Activated naive CD4-positive, alpha-beta T cell treated with anti-CD3 and anti-CD28 coated beads for 36 hours (primary cell): ENCODE measurements at regions of chr1 and their contacts with region 1.

Region 1: GRCh38 chr1:225777583-225778336 is at the start of gene SRP9:
- DNase-seq: peak; percentile 99
- H3K4me3 Mint-ChIP-seq: no peak within 1 kb of the TSS
- H3K27ac Mint-ChIP-seq: no peak within 1 kb of the TSS
- H3K4me1 Mint-ChIP-seq: peaks cover 32% of the 10 kb centered on the region
- H3K27me3 Mint-ChIP-seq: no peaks in the 10 kb centered on the region
- total RNA-seq, gene SRP9: 356 to 363 TPM

Region 2: DNA sequence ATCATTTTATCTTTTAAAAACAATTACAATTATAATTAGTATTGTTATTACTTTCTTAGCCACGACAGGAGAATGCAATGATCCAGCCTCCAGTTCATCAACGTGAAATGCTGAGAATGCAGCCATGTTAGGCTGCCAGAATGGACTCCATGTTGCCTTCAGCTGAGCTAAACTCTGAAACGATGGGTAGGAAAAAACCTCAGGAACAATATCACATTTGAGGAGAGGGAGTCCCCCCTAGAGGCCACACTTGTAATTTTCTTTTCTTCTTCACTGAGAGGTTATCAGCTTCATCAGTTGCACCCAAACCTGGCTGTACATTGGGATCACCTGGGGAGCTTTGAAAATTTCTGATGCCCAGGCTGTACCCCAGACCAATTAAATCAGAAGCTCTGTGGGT is 882.8 kb before region 1 on chr1:
- CTCF ChIA-PET with region 1: no interaction called
- intact Hi-C with region 1: no loop called
- DNase-seq: no peak
- H3K4me3 Mint-ChIP-seq: no peak overlapping the region
- H3K27ac Mint-ChIP-seq: no peak overlapping the region
- H3K4me1 Mint-ChIP-seq: no peaks in the 10 kb centered on the region
- H3K27me3 Mint-ChIP-seq: peaks cover 2% of the 10 kb centered on the region

Region 3: GRCh38 chr1:225044258-225044657 is 733.5 kb before region 1 on chr1:
- CTCF ChIA-PET with region 1: no interaction called
- intact Hi-C with region 1: no loop called
- DNase-seq: no peak
- H3K4me3 Mint-ChIP-seq: no peak overlapping the region
- H3K27ac Mint-ChIP-seq: no peak overlapping the region
- H3K4me1 Mint-ChIP-seq: no peaks in the 10 kb centered on the region
- H3K27me3 Mint-ChIP-seq: peaks cover 4% of the 10 kb centered on the region

Region 4: DNA sequence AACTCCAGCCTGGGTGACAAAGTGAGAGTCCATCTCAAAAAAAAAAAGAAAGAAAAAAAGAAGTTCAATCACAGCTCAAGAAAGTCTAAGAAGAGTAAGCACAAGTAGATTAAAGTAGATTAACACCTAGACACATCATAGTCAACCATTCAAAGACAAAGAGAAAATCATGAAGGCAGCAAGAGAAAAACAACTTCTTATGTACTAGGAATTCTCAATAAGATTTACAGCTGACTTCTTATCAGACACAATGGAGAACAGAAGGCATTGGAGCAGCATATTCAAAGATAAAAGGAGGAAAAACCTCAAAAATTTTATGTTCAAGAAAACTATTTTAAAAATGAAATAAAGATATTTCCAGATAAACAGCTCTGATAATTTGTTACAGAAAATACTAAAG is 497.2 kb before region 1 on chr1:
- CTCF ChIA-PET with region 1: no interaction called
- intact Hi-C with region 1: no loop called
- DNase-seq: no peak
- H3K4me3 Mint-ChIP-seq: no peak overlapping the region
- H3K27ac Mint-ChIP-seq: no peak overlapping the region
- H3K4me1 Mint-ChIP-seq: no peaks in the 10 kb centered on the region
- H3K27me3 Mint-ChIP-seq: peaks cover 4% of the 10 kb centered on the region

Region 5: GRCh38 chr1:225441314-225442122 is 336.2 kb before region 1 on chr1:
- CTCF ChIA-PET with region 1: no interaction called
- intact Hi-C with region 1: loop called (anchors 1 kb)
- DNase-seq: no peak
- H3K4me3 Mint-ChIP-seq: peak overlapping the region; percentile 12
- H3K27ac Mint-ChIP-seq: peak overlapping the region; percentile 36
- H3K4me1 Mint-ChIP-seq: peaks cover 51% of the 10 kb centered on the region
- H3K27me3 Mint-ChIP-seq: no peaks in the 10 kb centered on the region

Region 6: DNA sequence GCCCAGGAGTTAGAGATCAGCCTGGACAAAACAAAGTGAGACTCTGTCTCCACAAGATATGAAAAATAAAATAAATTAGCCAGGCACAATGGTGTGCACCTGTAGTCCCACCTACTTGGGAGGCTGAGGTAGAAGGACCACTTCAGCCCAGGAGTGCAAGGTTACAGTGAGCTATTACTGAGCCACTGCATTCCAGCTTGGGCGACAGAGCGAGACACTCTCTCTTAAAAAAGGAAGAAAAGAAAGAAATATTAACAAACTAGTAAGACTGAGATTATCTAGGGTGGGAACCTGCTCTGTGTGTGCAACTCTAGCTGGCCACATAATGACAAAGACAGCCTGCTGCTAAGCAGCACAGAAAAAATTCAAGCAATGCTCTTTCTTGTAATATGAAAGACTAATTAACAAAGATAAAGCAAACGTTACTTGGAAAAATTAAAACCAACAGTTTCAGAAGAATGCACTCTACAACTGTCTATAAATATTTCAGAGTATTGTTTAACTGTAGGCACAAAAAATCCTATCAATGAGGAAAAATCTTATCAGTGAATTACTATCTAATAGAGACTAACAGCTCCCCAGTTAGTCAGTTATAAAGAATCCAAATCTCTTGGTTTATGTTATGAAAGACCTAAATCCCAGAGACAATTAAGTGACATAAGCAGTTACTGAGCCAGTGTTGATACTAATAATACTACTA is 199.4 kb before region 1 on chr1:
- CTCF ChIA-PET with region 1: no interaction called
- intact Hi-C with region 1: no loop called
- DNase-seq: no peak
- H3K4me3 Mint-ChIP-seq: no peak overlapping the region
- H3K27ac Mint-ChIP-seq: no peak overlapping the region
- H3K4me1 Mint-ChIP-seq: peaks cover 2% of the 10 kb centered on the region
- H3K27me3 Mint-ChIP-seq: no peaks in the 10 kb centered on the region

Region 7: GRCh38 chr1:225652729-225653462 is 124.9 kb before region 1 on chr1 and contains the start of gene ENAH:
- CTCF ChIA-PET with region 1: interaction called, 5 read pairs
- intact Hi-C with region 1: loop called (anchors 5 kb)
- DNase-seq: peak; percentile 52
- H3K4me3 Mint-ChIP-seq: peak within 1 kb of the TSS; percentile 85
- H3K27ac Mint-ChIP-seq: peak within 1 kb of the TSS; percentile 50
- H3K4me1 Mint-ChIP-seq: peaks cover 10% of the 10 kb centered on the region
- H3K27me3 Mint-ChIP-seq: peaks cover 24% of the 10 kb centered on the region
- total RNA-seq, gene ENAH: 0.91 to 2.0 TPM

Region 8: DNA sequence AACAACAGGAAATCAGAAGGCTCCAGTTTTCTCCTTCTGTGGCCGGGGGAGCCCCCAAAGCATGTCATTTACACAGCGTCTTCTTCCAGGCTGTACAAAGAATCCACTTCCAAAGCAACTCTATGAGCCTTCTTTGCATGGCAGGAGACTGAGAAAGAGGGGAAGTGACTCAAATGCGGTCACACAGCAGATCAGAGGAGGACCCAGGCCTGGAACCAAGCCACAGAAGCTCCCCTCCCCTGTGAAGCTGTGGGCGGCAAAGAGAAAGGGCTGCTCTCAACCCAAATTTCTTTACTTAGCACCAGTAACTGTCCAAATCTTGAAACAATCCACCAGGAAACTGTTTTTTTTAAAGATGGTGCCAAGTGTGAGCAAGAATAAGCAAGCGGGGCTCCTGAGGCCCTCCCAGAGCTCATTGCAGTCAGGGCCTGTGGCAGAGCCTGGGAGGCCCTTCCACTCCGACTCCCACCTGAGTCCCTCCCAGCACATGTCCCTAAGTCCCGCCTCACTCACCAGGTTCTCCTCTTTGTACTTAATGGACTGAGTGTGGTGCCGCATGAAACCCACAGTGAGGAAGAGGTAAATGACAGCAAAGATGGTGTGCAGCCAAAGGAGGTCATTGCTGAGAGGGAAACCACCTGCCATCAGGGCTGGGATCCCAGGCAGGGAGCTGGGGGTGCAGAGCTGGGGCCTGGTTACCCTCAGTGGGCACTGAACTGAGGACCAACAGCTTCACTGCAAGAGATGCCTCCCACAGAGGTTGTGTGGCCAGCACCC is 88.5 kb after region 1 on chr1:
- CTCF ChIA-PET with region 1: interaction called, 3 read pairs
- intact Hi-C with region 1: loop called (anchors 1 kb)
- DNase-seq: peak; percentile 90
- H3K4me3 Mint-ChIP-seq: peak overlapping the region; percentile 4
- H3K27ac Mint-ChIP-seq: peak overlapping the region; percentile 79
- H3K4me1 Mint-ChIP-seq: peaks cover 43% of the 10 kb centered on the region
- H3K27me3 Mint-ChIP-seq: no peaks in the 10 kb centered on the region

Region 9: GRCh38 chr1:225911191-225912130 is 133.7 kb after region 1 on chr1:
- CTCF ChIA-PET with region 1: interaction called, 13 read pairs
- intact Hi-C with region 1: loop called (anchors 1 kb)
- DNase-seq: peak; percentile 75
- H3K4me3 Mint-ChIP-seq: no peak overlapping the region
- H3K27ac Mint-ChIP-seq: no peak overlapping the region
- H3K4me1 Mint-ChIP-seq: peaks cover 21% of the 10 kb centered on the region
- H3K27me3 Mint-ChIP-seq: no peaks in the 10 kb centered on the region

Region 10: DNA sequence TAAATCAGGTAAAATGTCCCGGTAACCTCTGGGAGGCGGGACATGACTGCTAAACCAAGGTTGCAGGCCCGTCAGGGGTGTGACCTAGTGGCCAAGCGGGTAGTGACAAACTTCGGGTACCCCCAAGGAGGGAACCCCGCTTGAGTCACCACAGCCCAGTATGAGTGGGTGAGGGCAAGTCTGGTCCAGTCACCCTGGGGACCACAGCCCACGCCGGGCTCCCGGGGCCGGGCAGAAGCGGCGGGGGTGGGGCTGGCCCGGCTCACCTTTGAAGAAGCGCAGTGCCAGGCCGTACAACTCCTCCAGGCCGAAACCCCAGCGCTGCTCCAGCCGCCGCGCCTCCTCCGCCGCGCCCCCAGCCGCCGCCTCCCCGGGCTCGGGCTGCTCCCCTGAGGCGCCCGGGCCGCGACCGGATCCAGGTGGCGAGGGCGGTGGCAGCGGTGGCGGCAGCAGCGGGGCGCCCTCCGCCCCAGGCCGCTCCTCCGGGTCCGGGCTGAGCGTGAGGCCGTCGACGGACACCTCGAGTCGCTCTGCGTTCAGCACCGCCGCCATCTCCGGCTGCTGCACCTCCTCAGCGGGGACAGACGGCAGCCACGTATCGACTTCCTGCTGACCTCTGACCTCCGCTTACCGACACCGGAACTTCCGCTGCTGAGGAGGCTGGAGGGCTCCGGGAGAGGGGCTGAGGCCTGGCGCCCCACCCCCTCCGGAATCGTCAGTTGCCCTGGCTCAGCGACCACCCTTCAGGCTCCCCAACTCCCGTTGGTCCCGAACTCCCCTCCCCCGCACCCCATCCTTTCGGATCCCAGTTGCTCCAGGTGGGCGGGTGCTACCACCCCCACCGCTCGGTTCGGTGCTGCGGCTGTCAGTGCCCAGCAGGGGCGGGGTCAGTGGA is 408.6 kb after region 1 on chr1 and contains the start of gene ACBD3:
- CTCF ChIA-PET with region 1: no interaction called
- intact Hi-C with region 1: loop called (anchors 5 kb)
- DNase-seq: peak; percentile 91
- H3K4me3 Mint-ChIP-seq: peak within 1 kb of the TSS; percentile 89
- H3K27ac Mint-ChIP-seq: peak within 1 kb of the TSS; percentile 87
- H3K4me1 Mint-ChIP-seq: peaks cover 34% of the 10 kb centered on the region
- H3K27me3 Mint-ChIP-seq: no peaks in the 10 kb centered on the region
- total RNA-seq, gene ACBD3: 15.0 to 15.7 TPM